GM12878 (cell line): ENCODE measurements at regions of chr1 and their contacts with region 1.

Region 1: DNA sequence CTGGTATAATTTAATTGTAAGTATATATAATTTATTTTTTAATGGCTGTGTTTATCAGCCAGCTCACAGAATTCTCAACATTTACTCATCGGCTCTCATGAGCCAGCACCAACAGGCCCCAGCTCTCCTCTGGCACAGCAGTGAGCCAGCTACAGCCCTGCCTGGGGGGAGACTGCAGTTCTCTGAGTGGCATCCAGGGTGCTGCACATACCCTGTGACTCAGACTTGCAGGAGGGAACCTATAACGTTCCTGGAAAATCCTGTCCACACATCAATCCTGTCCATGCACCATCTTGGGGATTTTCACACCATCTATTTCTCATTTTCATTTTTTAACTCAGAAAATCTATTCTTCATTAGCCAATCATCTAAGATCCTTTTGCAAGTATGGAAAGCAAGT is 36.5 kb downstream of the FHAD1 start:
- DNase-seq: no peak
- ATAC-seq: peak; percentile 30; the same call in 1 of the 3 replicates
- H3K4me3 ChIP-seq: no peak overlapping the region
- H3K27ac ChIP-seq: no peak overlapping the region
- H3K4me1 ChIP-seq: no peaks in the 10 kb centered on the region
- H3K27me3 ChIP-seq: no peaks in the 10 kb centered on the region
- CTCF ChIP-seq: no peak
- EP300 ChIP-seq: no peak
- POLR2A ChIP-seq: no peak
- RAD21 ChIP-seq: no peak

Region 2: GRCh38 chr1:15304701-15305467 is 21.4 kb after region 1 on chr1:
- CTCF ChIA-PET with region 1: interaction called, 10 read pairs
- POLR2A ChIA-PET with region 1: no interaction called
- RAD21 ChIA-PET with region 1: interaction called, 3 read pairs
- SMC1A ChIA-PET with region 1: no interaction called
- in situ Hi-C with region 1: no loop called
- intact Hi-C with region 1: no loop called
- DNase-seq: no peak
- ATAC-seq: peak; percentile 85
- H3K4me3 ChIP-seq: no peak overlapping the region
- H3K27ac ChIP-seq: no peak overlapping the region
- H3K4me1 ChIP-seq: no peaks in the 10 kb centered on the region
- H3K27me3 ChIP-seq: no peaks in the 10 kb centered on the region; a peak in 1 of 4 replicates
- CTCF ChIP-seq: peak; percentile 87 to 92 (median 88)
- EP300 ChIP-seq: no peak
- POLR2A ChIP-seq: no peak
- RAD21 ChIP-seq: peak; percentile 84